ENCODE measurements at regions of chr7 and their contacts with region 1.

Region 1: DNA sequence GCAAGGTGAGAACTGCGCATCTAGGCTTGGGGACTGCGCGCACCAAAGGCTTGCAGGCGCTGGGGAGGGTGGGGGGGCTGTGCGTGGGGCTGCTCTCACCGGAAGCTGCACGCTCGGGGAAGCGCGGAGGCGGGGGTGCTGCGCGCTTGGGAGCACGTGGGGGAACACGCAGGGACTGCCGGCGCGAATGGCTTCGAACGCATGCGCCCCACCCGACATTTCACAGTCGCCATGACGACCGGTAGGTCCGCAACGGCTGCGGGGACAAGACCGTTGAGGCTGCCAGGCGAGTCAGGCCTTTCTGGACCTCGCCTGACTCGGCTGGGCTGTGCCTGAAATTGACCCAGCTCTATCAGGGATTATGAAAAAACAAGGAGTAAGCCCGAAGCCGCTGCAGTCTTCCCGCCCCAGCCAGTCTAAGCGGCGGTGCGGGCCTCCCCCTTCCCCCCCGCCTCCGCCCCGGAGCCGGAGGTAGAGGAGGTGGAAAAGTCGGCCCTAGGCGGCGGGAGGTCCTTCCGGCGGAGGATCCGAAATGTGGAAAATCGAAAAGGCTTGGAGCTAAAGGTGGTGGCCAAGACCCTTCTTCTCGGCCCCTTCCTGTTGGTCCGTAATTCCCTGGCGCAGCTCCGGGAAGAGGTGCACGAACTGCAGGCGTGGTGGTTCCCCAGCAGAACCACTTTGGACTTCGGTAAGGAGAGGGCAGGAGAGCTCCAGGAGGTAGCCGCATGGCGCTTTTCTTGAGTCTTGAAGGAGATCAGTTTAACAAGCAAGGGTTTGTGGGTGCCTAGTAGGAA is 34.9 kb upstream of the STEAP1 start:
- DNase-seq: peak; percentile 1
- ATAC-seq: peak; percentile 24; the same call in 1 of the 2 replicates
- H3K4me3 ChIP-seq: peak overlapping the region; percentile 26
- H3K27ac ChIP-seq: no peak overlapping the region
- H3K4me1 ChIP-seq: no peaks in the 10 kb centered on the region
- H3K27me3 ChIP-seq: peaks cover 12% of the 10 kb centered on the region
- CTCF ChIP-seq: no peak
- POLR2A ChIP-seq: no peak
- RAD21 ChIP-seq: no peak

Region 2: DNA sequence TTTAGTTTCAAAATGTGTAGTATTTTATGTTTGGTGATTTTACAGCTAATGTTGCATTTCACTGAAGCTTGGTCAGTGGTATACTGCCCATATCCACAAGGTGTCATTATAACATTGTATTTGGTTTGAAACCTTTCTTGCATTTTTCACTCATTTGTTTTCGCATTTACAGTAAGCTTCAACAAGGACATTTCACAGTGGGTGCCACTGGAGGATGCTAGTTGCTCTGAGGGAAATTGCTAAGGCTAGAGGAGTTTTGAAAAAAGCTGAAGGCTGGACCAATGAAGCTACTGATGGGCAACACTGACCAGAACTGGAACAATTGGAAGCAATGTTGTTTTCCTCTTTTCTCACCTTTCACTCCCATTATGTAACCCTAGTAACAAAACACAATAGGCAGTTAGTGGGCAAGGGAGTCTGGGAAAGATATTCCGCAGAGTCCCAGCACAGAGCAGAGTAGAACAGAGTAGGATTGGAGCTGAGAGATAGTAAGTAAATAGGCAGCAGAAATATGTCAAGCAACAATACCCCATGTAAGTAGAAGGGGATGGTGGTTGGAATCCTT is 1875.9 kb before region 1 on chr7:
- CTCF ChIA-PET with region 1: no interaction called
- POLR2A ChIA-PET with region 1: no interaction called
- dilution Hi-C with region 1: no loop called
- in situ Hi-C with region 1: no loop called
- intact Hi-C with region 1: loop called (anchors 2 kb)
- DNase-seq: peak; percentile 44
- ATAC-seq: peak; percentile 77
- H3K4me3 ChIP-seq: no peak overlapping the region
- H3K27ac ChIP-seq: no peak overlapping the region
- H3K4me1 ChIP-seq: no peaks in the 10 kb centered on the region
- H3K27me3 ChIP-seq: no peaks in the 10 kb centered on the region
- CTCF ChIP-seq: peak; percentile 71
- POLR2A ChIP-seq: no peak
- RAD21 ChIP-seq: peak; percentile 67

Region 3: GRCh38 chr7:90236721-90237289 is 117.4 kb after region 1 on chr7:
- CTCF ChIA-PET with region 1: no interaction called
- POLR2A ChIA-PET with region 1: no interaction called
- dilution Hi-C with region 1: no loop called
- in situ Hi-C with region 1: no loop called
- intact Hi-C with region 1: no loop called
- DNase-seq: no peak
- ATAC-seq: no peak
- H3K4me3 ChIP-seq: no peak overlapping the region
- H3K27ac ChIP-seq: no peak overlapping the region
- H3K4me1 ChIP-seq: no peaks in the 10 kb centered on the region
- H3K27me3 ChIP-seq: no peaks in the 10 kb centered on the region
- CTCF ChIP-seq: no peak
- POLR2A ChIP-seq: no peak
- RAD21 ChIP-seq: no peak